Testis (tissue), 5 donors: ENCODE measurements at regions of chr12 and their contacts with region 1.

Region 1: GRCh38 chr12:57846577-57847319 is at the start of gene CTDSP2:
- DNase-seq: peak; percentile 100
- H3K4me3 ChIP-seq: peak within 1 kb of the TSS; percentile 96 to 99
- H3K27ac ChIP-seq: peak within 1 kb of the TSS; percentile 99 to 100
- H3K4me1 ChIP-seq: peaks cover 26% of the 10 kb centered on the region
- H3K27me3 ChIP-seq: no peaks in the 10 kb centered on the region
- CTCF ChIP-seq: peak in 1 of 3 experiments; percentile 22
- POLR2A ChIP-seq: peak; percentile 92
- total RNA-seq, gene CTDSP2: 103 to 140 TPM

Region 2: DNA sequence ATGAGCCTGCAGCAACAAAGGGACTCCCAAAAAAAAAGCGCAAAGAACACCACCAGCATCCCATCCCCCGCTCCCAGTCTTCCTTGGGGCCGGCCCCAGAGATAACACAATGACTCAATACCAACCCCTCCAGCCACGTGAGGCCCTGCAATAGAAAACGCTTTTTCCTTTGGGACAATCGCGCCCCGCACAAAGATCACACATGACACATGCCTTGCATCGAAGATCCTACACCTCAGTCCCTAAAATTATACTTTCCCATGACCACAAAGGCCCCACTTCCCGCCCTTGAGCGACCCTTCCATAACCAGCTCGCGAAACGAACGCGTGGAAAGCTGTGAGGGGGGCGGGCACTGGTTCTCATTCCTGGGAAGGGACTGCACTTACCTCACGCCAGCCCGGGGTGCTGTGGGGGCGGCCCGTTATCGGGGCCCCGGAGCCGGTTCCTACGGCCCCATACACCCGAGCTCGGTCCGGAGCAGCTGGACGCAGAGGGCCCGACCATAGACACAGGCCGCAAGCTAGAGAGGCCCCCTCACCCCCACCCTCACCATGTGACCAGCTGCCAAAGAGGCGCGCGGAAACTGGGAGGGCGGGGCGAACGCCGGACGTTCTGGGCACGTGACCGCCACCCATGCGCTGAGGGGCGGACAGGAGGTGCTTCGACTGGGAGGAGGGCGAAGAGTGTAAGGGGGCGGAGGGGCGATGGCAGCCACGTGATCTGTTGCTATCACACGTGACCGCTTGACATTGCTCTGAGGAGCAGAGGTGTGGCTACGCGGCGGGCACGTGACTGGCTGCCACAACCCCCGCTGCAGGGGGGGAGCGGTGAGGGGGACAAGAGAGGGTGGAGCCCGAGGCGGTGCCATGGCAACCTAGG is 94.7 kb before region 1 on chr12 and contains the start of gene CDK4:
- intact Hi-C with region 1: no loop called
- DNase-seq: peak; percentile 100
- H3K4me3 ChIP-seq: peak within 1 kb of the TSS; percentile 70 to 80
- H3K27ac ChIP-seq: peak within 1 kb of the TSS; percentile 81 to 87
- H3K4me1 ChIP-seq: peaks cover 27% of the 10 kb centered on the region
- H3K27me3 ChIP-seq: no peaks in the 10 kb centered on the region
- CTCF ChIP-seq: no peak
- POLR2A ChIP-seq: no peak
- total RNA-seq, gene CDK4: 47.0 to 73.5 TPM

Region 3: DNA sequence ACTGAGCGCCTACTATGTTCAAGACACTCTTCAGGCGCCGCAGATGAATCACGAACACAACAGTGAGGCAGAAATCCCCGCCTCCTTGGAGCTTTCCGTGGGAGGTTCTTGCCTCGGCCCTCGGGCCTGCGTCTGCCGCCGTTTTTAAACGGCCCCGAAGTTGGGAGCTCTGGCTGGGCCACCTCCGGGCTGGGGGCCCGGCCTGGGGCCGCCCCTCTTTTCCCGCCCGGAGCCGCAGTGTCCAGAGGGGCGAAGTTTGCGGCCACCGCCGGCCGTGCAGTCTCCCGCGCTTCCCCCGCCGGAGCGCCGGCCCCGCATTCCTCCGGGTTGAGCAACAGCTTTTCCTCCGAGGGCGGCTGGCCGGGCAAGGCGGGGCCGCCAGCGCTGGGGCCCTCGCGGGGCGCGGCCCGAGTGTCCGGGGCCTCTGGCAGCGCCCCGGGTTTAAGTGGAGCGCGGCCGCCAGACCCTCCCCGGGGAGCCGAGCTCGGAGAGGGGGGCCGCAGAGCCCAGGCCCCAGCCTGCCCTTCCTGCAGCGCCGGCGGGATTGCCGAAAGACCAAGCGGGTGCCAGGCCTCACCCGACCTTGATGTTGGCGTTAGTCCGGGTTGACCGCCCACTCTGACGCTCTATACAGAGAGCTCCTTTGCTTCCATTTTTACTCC is 18.5 kb after region 1 on chr12:
- intact Hi-C with region 1: no loop called
- DNase-seq: peak; percentile 74
- H3K4me3 ChIP-seq: peak overlapping the region; percentile 64 to 72
- H3K27ac ChIP-seq: peak overlapping the region; percentile 91 to 96
- H3K4me1 ChIP-seq: peaks cover 5% of the 10 kb centered on the region
- H3K27me3 ChIP-seq: no peaks in the 10 kb centered on the region
- CTCF ChIP-seq: no peak
- POLR2A ChIP-seq: no peak

Region 4: GRCh38 chr12:57893431-57894353 is 46.9 kb after region 1 on chr12:
- intact Hi-C with region 1: loop called (anchors 5 kb)
- DNase-seq: peak; percentile 93
- H3K4me3 ChIP-seq: no peak overlapping the region
- H3K27ac ChIP-seq: peak overlapping the region; percentile 92 to 98
- H3K4me1 ChIP-seq: peaks cover 97% of the 10 kb centered on the region
- H3K27me3 ChIP-seq: no peaks in the 10 kb centered on the region
- CTCF ChIP-seq: peak in 1 of 3 experiments; percentile 44
- POLR2A ChIP-seq: no peak